ENCODE measurements at regions of chr6 and their contacts with region 1.

Region 1: GRCh38 chr6:2999618-3000557 is at the start of gene NQO2:
- DNase-seq: peak; percentile 71
- ATAC-seq: peak; percentile 86
- H3K4me3 ChIP-seq: peak within 1 kb of the TSS; percentile 70 to 94
- H3K27ac ChIP-seq: peak within 1 kb of the TSS; percentile 81
- H3K4me1 ChIP-seq: peaks cover 18 to 26% of the 10 kb centered on the region in 2 experiments
- H3K27me3 ChIP-seq: no peaks in the 10 kb centered on the region
- CTCF ChIP-seq: 0 out of 6 replicates have a peak, but pooled peaks of 1 of the 3 experiments have one; percentile 3
- POLR2A ChIP-seq: peak; percentile 76
- RAD21 ChIP-seq: no peak
- total RNA-seq, gene NQO2: 82.9 TPM

Region 2: DNA sequence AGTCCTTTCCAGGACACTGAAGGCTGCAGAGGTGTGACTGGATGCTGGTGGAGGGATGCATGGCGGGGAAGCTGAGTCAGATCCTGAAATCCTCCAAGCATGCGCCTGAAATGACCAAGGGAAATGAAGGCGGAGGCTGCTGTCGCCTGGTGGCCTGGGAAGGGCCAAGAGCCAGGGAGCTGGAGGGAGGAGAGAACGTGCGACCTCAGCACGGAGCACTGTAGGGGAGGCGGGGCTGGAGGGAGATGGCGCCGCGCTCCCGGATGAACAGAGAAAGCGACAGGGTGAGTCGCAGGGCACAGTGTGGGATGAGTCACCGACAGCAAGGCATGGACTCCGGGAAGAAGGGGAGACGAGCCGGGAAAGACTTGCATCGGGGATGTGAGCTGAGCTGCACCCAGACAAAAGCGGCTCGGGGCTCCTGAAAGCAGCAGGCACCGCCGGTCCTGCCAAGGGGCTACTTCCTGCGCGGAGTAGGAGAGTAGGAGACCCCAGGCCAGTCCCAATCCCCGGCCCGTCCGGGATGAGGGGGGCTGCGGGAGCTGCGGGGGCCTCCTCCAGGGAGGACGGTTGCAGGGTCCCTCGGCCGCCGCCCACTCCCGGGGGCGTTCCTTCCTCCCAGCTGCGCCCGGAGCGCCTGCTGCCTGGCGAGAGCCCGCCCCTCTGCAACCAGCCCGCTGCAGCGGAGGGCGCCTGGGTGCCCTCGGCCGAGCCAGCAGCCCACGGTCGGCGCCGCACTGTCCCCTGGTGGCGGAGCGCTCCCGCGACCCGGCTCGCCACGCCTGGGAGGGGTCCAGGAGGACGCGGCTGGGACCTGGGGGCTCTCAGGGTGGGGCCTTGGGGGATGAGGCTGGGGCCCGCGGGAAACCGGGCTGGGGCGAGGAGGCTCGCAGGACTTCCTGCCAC is 11.2 kb before region 1 on chr6:
- CTCF ChIA-PET with region 1: interaction called, 15 read pairs
- POLR2A ChIA-PET with region 1: interaction called, 17 read pairs
- RAD21 ChIA-PET with region 1: interaction called in 1 of 2 experiments, 6 read pairs
- intact Hi-C with region 1: no loop called
- DNase-seq: peak; percentile 95
- ATAC-seq: peak; percentile 82
- H3K4me3 ChIP-seq: peak overlapping the region; percentile 57 to 62
- H3K27ac ChIP-seq: peak overlapping the region; percentile 92
- H3K4me1 ChIP-seq: peaks cover 34 to 54% of the 10 kb centered on the region in 2 experiments
- H3K27me3 ChIP-seq: no peaks in the 10 kb centered on the region
- CTCF ChIP-seq: peak in 2 of 3 experiments; percentile 64 to 81; a peak in 4 of 6 replicates
- POLR2A ChIP-seq: peak; percentile 62
- RAD21 ChIP-seq: no peak

Region 3: DNA sequence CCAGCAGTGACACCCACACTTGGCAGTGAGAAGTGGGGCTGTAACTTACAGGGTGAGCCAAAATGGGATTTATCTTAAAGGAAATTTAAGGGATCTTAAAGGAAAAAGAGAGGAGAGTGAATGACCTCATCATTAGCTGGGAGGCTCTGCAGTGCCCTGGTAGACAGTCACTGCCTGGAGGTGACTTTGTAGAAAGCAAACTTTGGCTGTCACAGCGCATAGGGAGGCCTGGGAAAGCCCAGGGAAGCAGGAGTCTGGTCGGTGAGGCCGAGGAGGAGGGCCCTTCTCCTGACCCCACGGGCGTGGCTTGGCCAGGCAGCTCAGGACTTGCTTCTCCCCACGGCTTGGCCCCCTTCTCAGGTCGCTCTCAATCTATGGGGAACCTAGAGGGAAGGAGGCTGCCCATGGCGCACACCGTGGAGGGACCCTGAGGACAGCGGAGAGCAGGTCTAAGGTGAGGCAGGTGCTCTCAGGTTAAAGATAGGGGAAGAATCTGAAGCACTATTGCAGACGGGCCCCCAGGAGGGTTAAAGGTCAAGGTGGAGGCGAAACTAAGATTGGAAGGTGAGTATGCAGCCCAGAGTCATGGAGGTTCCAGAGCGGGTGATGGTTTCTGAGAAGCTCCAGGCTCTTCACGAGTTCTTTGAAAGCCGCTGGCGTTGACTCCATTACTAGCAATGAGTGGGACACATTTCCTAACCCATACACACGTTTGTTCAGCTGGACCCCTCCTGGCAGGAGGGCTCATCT is 52.8 kb after region 1 on chr6:
- CTCF ChIA-PET with region 1: interaction called, 17 read pairs
- POLR2A ChIA-PET with region 1: interaction called, 21 read pairs
- RAD21 ChIA-PET with region 1: interaction called, 3 to 5 read pairs
- intact Hi-C with region 1: loop called (anchors 1 kb)
- DNase-seq: no peak
- ATAC-seq: no peak
- H3K4me3 ChIP-seq: peak overlapping the region; percentile 57 to 63
- H3K27ac ChIP-seq: no peak overlapping the region
- H3K4me1 ChIP-seq: peaks cover 10 to 24% of the 10 kb centered on the region in 2 experiments; a peak in 2 of 4 replicates
- H3K27me3 ChIP-seq: no peaks in the 10 kb centered on the region
- CTCF ChIP-seq: no peak
- POLR2A ChIP-seq: no peak
- RAD21 ChIP-seq: no peak

Region 4: GRCh38 chr6:3118353-3119039 is 118.6 kb after region 1 on chr6 and contains the start of gene BPHL:
- CTCF ChIA-PET with region 1: interaction called, 4 read pairs
- POLR2A ChIA-PET with region 1: no interaction called
- RAD21 ChIA-PET with region 1: no interaction called
- intact Hi-C with region 1: loop called (anchors 5 kb)
- DNase-seq: peak; percentile 84
- ATAC-seq: peak; percentile 94
- H3K4me3 ChIP-seq: peak within 1 kb of the TSS; percentile 80 to 99
- H3K27ac ChIP-seq: peak within 1 kb of the TSS; percentile 86
- H3K4me1 ChIP-seq: peaks cover 14 to 23% of the 10 kb centered on the region in 2 experiments
- H3K27me3 ChIP-seq: no peaks in the 10 kb centered on the region
- CTCF ChIP-seq: no peak
- POLR2A ChIP-seq: peak; percentile 72
- RAD21 ChIP-seq: no peak
- total RNA-seq, gene BPHL: 31.3 TPM

Measured in HCT116 (cell line).